ENCODE measurements at regions of chr6 and their contacts with region 1.

Region 1: GRCh38 chr6:32393665-32394420 is 13.1 kb downstream of the BTNL2 start:
- DNase-seq: peak in 1 of 2 donors; percentile 59
- ATAC-seq: peak; percentile 88 to 99 (median 96)
- H3K4me3 ChIP-seq: no peak overlapping the region
- H3K27ac ChIP-seq: peak overlapping the region in 9 of 10 donors; percentile 23 to 87 (median 61)
- H3K4me1 ChIP-seq: peaks cover 0 to 19% (median 3%) of the 10 kb centered on the region in 9 donors
- H3K27me3 ChIP-seq: peaks cover 0 to 10% (median 0%) of the 10 kb centered on the region in 7 donors
- CTCF ChIP-seq: peak in 3 of 9 donors; percentile 9 to 43 (median 28)

Region 2: GRCh38 chr6:32255199-32256153 is 138.4 kb before region 1 on chr6:
- intact Hi-C with region 1: loop called in 1 of 10 experiments (anchors 10 kb)
- DNase-seq: peak; percentile 71 to 79
- ATAC-seq: peak; percentile 91 to 99 (median 98)
- H3K4me3 ChIP-seq: peak overlapping the region in 9 of 10 donors; percentile 11 to 48 (median 37)
- H3K27ac ChIP-seq: peak overlapping the region; percentile 64 to 94 (median 84)
- H3K4me1 ChIP-seq: peaks cover 0 to 32% (median 10%) of the 10 kb centered on the region in 9 donors
- H3K27me3 ChIP-seq: peaks cover 0 to 10% (median 0%) of the 10 kb centered on the region in 7 donors
- CTCF ChIP-seq: peak; percentile 40 to 90 (median 79)

Region 3: GRCh38 chr6:32472781-32473375 is 79.0 kb after region 1 on chr6:
- intact Hi-C with region 1: no loop called
- DNase-seq: no peak
- ATAC-seq: peak in 6 of 8 donors; percentile 34 to 52 (median 43)
- H3K4me3 ChIP-seq: no peak overlapping the region
- H3K27ac ChIP-seq: peak overlapping the region in 7 of 10 donors; percentile 43 to 88 (median 81)
- H3K4me1 ChIP-seq: peaks cover 0 to 4% (median 0%) of the 10 kb centered on the region in 9 donors
- H3K27me3 ChIP-seq: no peaks in the 10 kb centered on the region
- CTCF ChIP-seq: no peak

Measured in heart right ventricle (tissue), 16 donors.